Heart right ventricle (tissue), 16 donors: ENCODE measurements at regions of chr5 and their contacts with region 1.

Region 1: GRCh38 chr5:95646554-95647431 is at the start of gene RFESD:
- DNase-seq: peak; percentile 97 to 99
- ATAC-seq: peak; percentile 98 to 100 (median 99)
- H3K4me3 ChIP-seq: peak within 1 kb of the TSS; percentile 37 to 83 (median 60)
- H3K27ac ChIP-seq: peak within 1 kb of the TSS; percentile 88 to 94 (median 91)
- H3K4me1 ChIP-seq: peaks cover 0 to 17% (median 9%) of the 10 kb centered on the region in 9 donors
- H3K27me3 ChIP-seq: no peaks in the 10 kb centered on the region
- CTCF ChIP-seq: peak in 5 of 9 donors; percentile 10 to 32 (median 16)
- total RNA-seq, gene RFESD: 2.4 to 5.3 (median 3.8) TPM

Region 2: DNA sequence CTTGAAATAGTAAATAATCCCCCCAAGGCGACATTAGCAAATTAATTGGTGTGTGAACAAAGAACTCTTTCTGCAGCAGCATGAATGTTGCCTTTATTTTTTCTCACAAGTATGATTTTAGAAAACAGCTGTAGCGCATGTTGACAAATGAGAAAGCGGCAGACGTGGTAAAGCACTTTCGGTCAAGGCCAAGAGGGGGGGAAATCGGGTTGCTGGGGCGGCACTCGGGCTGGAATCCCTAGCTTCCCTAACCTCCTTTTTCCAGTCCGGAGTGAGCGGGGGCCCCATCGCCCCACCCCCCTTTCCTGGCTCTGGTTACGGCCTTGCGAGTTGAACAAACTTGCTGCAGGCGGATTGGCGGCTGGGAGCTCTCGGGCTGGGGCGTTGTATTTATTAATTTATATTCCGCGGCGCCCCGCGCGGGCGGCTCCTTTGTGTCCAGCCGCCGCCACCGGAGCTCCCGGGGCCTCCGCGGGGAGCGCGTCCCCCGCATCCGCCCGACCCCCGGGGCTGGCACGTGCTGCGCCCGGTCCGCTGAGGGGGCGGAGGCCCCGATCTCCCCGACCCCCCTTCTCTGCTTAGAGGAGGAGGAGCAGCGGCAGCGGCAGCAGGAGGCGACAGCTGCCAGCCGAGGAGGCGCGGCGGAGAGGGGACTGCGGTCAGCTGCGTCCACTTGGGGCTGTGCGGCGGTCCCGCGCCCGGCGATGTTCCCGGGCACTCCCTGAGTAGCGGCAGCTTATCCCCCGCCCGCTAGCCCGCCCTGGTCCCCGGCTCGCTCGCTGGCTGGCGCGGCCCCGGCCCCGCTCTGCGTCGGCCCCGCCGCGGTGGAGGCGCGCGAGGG is 84.2 kb after region 1 on chr5 and contains the start of gene RHOBTB3:
- intact Hi-C with region 1: loop called in 3 of 10 experiments (anchors 5 kb)
- DNase-seq: peak; percentile 90 to 91
- ATAC-seq: peak; percentile 74 to 88 (median 78)
- H3K4me3 ChIP-seq: peak within 1 kb of the TSS; percentile 56 to 84 (median 78)
- H3K27ac ChIP-seq: peak within 1 kb of the TSS; percentile 79 to 98 (median 93)
- H3K4me1 ChIP-seq: peaks cover 0 to 75% (median 48%) of the 10 kb centered on the region in 9 donors
- H3K27me3 ChIP-seq: peaks cover 0 to 9% (median 0%) of the 10 kb centered on the region in 7 donors
- CTCF ChIP-seq: peak in 1 of 9 donors; percentile 25
- total RNA-seq, gene RHOBTB3: 73.1 to 124 (median 94.4) TPM

Region 3: DNA sequence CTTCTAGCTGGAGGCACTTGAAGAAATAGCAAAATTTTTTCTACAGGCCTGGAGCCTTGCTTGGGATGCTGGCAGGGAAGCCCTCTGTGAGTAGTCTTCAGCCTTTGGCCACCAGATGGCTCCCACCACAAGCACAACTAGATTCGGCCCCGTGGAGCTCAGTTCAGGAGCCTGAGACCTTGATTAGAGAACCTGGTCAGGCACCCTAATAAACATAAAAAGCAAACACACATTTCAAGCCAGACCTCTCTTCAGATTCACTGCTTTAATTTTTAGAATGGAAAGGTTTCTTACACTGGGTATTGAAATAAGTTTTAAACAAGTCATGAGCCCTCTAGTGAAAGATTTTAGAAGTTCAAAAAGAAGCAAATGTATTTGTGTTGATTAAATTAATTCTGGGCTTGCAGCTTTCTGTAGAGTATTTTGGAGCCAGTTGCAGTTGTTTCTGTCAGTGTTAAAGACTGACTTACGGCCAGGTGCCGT is 134.3 kb after region 1 on chr5:
- intact Hi-C with region 1: loop called in 6 of 10 experiments (anchors 1 to 10 kb)
- DNase-seq: peak; percentile 68 to 84
- ATAC-seq: peak; percentile 88 to 95 (median 92)
- H3K4me3 ChIP-seq: no peak overlapping the region
- H3K27ac ChIP-seq: peak overlapping the region in 8 of 10 donors; percentile 5 to 77 (median 46)
- H3K4me1 ChIP-seq: peaks cover 0 to 52% (median 30%) of the 10 kb centered on the region in 9 donors
- H3K27me3 ChIP-seq: no peaks in the 10 kb centered on the region
- CTCF ChIP-seq: peak in 8 of 9 donors; percentile 70 to 96 (median 91)

Region 4: GRCh38 chr5:95835682-95836385 is 189.0 kb after region 1 on chr5:
- intact Hi-C with region 1: loop called in 3 of 10 experiments (anchors 5 to 10 kb)
- DNase-seq: no peak
- ATAC-seq: peak in 5 of 8 donors; percentile 12 to 31 (median 22)
- H3K4me3 ChIP-seq: peak overlapping the region in 8 of 10 donors; percentile 47 to 69 (median 61)
- H3K27ac ChIP-seq: peak overlapping the region in 8 of 10 donors; percentile 80 to 97 (median 88)
- H3K4me1 ChIP-seq: peaks cover 4 to 52% (median 21%) of the 10 kb centered on the region in 9 donors
- H3K27me3 ChIP-seq: no peaks in the 10 kb centered on the region
- CTCF ChIP-seq: no peak

Region 5: DNA sequence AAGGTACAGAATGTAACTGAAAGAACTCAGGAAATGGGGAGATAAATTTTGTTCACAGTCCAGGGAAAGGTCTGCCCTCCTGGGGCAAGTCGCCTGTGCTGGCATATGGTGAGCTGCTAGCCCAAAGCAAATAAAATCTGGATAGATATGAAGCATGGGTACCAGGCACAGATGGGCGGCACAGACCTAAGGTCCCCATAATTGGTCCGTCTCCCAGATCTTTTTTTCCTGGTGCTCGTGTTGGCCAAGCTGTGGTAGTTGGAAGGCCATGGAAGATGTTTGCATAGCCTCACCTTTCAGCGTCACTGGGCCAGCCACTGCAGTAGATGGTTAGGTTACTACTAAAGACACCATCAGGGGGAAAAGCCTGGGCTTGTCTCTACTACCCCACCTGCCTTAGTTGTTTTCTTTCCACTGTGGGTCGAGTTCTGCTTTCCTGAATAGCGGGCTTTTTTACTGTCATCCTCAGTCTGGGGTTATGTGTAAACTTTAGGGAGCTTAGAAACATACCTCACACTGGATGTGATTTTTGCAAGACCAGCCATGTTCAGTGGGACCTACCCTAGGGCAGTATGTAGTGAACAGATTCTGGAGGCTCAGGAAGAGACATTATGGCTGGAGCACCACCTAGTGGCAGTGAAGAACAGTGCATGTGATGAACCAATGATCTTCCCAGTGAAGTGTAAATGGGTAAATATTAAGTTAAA is 199.9 kb after region 1 on chr5:
- intact Hi-C with region 1: loop called in 9 of 10 experiments (anchors 1 to 10 kb)
- DNase-seq: peak in 1 of 2 donors; percentile 71
- ATAC-seq: peak; percentile 56 to 84 (median 72)
- H3K4me3 ChIP-seq: no peak overlapping the region
- H3K27ac ChIP-seq: no peak overlapping the region
- H3K4me1 ChIP-seq: peaks cover 0 to 41% (median 12%) of the 10 kb centered on the region in 9 donors
- H3K27me3 ChIP-seq: no peaks in the 10 kb centered on the region
- CTCF ChIP-seq: peak; percentile 92 to 98 (median 96)

Region 6: DNA sequence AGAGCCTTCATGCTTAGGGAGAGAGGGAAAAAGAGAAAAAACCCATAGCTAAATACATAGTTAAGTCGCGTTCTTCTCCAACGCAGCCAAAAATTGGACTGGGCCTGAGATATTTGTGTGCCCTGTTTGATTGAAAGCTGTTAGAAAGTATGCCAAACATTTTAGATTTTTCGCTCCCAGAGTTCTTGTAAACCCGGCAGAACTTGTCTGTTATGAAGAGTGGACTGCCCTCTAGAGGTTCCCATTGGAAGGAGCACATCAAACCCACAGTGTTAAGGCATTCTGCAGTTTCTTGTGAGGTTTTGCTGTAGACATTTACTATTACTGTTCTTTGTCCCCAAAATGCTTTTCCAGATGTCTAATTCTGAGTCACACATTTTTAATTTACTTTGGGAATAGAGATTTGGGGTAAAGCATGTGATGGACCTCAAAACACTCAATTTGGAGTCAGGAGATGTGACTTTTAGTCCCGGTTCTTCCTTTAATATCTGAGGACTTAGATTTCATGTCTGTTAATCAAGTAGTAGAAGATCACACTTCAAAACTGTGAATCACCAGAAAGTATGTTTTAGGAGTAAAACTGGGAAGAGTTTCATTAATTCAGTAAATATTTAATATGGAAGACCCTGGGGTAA is 689.7 kb after region 1 on chr5:
- intact Hi-C with region 1: loop called in 5 of 10 experiments (anchors 10 kb)
- DNase-seq: peak in 1 of 2 donors; percentile 78
- ATAC-seq: peak; percentile 61 to 92 (median 80)
- H3K4me3 ChIP-seq: peak overlapping the region in 2 of 10 donors; percentile 8 to 10
- H3K27ac ChIP-seq: peak overlapping the region in 8 of 10 donors; percentile 33 to 68 (median 50)
- H3K4me1 ChIP-seq: peaks cover 0 to 56% (median 15%) of the 10 kb centered on the region in 9 donors
- H3K27me3 ChIP-seq: no peaks in the 10 kb centered on the region
- CTCF ChIP-seq: peak; percentile 62 to 93 (median 88)

Region 7: GRCh38 chr5:96601811-96602244 is 955.0 kb after region 1 on chr5:
- intact Hi-C with region 1: loop called in 1 of 10 experiments (anchors 5 kb)
- DNase-seq: peak in 1 of 2 donors; percentile 77
- ATAC-seq: peak; percentile 63 to 93 (median 88)
- H3K4me3 ChIP-seq: peak overlapping the region in 3 of 10 donors; percentile 16 to 29 (median 19)
- H3K27ac ChIP-seq: peak overlapping the region in 1 of 10 donors; percentile 6
- H3K4me1 ChIP-seq: peaks cover 0 to 16% (median 4%) of the 10 kb centered on the region in 9 donors
- H3K27me3 ChIP-seq: peaks cover 0 to 10% (median 0%) of the 10 kb centered on the region in 7 donors
- CTCF ChIP-seq: peak; percentile 67 to 87 (median 83)